ENCODE measurements at regions of chr22 and their contacts with region 1.

Region 1: GRCh38 chr22:25540166-25540907 is 24.1 kb upstream of the GRK3 start:
- DNase-seq: no peak
- ATAC-seq: no peak
- H3K4me3 ChIP-seq: no peak overlapping the region
- H3K27ac ChIP-seq: no peak overlapping the region
- H3K4me1 ChIP-seq: no peaks in the 10 kb centered on the region
- H3K27me3 ChIP-seq: no peaks in the 10 kb centered on the region
- CTCF ChIP-seq: no peak
- EP300 ChIP-seq: no peak
- POLR2A ChIP-seq: no peak
- RAD21 ChIP-seq: no peak

Region 2: GRCh38 chr22:25369041-25369440 is 171.3 kb before region 1 on chr22:
- CTCF ChIA-PET with region 1: no interaction called
- POLR2A ChIA-PET with region 1: no interaction called
- RAD21 ChIA-PET with region 1: no interaction called
- SMC1A ChIA-PET with region 1: no interaction called
- in situ Hi-C with region 1: no loop called
- intact Hi-C with region 1: no loop called
- DNase-seq: no peak
- ATAC-seq: no peak
- H3K4me3 ChIP-seq: no peak overlapping the region
- H3K27ac ChIP-seq: no peak overlapping the region
- H3K4me1 ChIP-seq: peaks cover 5% of the 10 kb centered on the region; the same call in 1 of the 2 replicates
- H3K27me3 ChIP-seq: no peaks in the 10 kb centered on the region
- CTCF ChIP-seq: no peak
- EP300 ChIP-seq: no peak
- POLR2A ChIP-seq: no peak
- RAD21 ChIP-seq: no peak

Region 3: GRCh38 chr22:25465949-25466348 is 74.4 kb before region 1 on chr22:
- CTCF ChIA-PET with region 1: interaction called, 44 read pairs
- POLR2A ChIA-PET with region 1: no interaction called
- RAD21 ChIA-PET with region 1: interaction called, 23 read pairs
- SMC1A ChIA-PET with region 1: interaction called, 12 read pairs
- in situ Hi-C with region 1: no loop called
- intact Hi-C with region 1: loop called (anchors 5 kb)
- DNase-seq: no peak
- ATAC-seq: no peak
- H3K4me3 ChIP-seq: no peak overlapping the region
- H3K27ac ChIP-seq: no peak overlapping the region
- H3K4me1 ChIP-seq: no peaks in the 10 kb centered on the region
- H3K27me3 ChIP-seq: no peaks in the 10 kb centered on the region
- CTCF ChIP-seq: no peak
- EP300 ChIP-seq: no peak
- POLR2A ChIP-seq: no peak
- RAD21 ChIP-seq: no peak

Region 4: GRCh38 chr22:25554238-25554671 is 13.9 kb after region 1 on chr22:
- CTCF ChIA-PET with region 1: interaction called, 19 read pairs
- POLR2A ChIA-PET with region 1: interaction called, 6 read pairs
- RAD21 ChIA-PET with region 1: interaction called, 18 read pairs
- SMC1A ChIA-PET with region 1: interaction called, 31 read pairs
- in situ Hi-C with region 1: no loop called
- intact Hi-C with region 1: no loop called
- DNase-seq: no peak
- ATAC-seq: peak; percentile 54; the same call in 2 of the 3 replicates
- H3K4me3 ChIP-seq: no peak overlapping the region
- H3K27ac ChIP-seq: no peak overlapping the region
- H3K4me1 ChIP-seq: peaks cover 3% of the 10 kb centered on the region; the same call in 1 of the 2 replicates
- H3K27me3 ChIP-seq: no peaks in the 10 kb centered on the region
- CTCF ChIP-seq: no peak
- EP300 ChIP-seq: no peak
- POLR2A ChIP-seq: no peak
- RAD21 ChIP-seq: no peak

Region 5: DNA sequence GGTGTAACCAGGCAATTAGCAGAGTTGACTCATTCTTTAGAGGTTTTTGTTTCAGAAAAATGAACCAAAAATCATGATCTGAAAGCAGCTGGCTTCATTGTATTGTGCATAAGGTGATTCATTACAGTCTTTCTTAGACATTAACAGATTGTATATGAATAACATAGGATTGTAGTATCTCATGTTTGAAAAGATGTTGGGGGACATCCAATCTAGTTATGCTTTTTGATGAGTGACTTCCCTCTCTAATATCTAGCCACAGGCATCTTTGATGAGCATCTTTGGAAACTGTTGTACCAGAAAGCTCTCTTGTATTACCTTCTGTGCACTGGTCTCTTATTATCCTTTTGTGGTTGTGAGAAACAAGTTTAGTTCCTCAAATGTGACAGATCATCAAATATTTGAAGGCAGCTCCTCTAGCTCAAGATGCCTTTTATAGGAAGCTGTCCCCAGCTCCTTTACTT is 32.4 kb after region 1 on chr22:
- CTCF ChIA-PET with region 1: interaction called, 89 read pairs
- POLR2A ChIA-PET with region 1: interaction called, 4 read pairs
- RAD21 ChIA-PET with region 1: interaction called, 202 read pairs
- SMC1A ChIA-PET with region 1: interaction called, 170 read pairs
- in situ Hi-C with region 1: no loop called
- intact Hi-C with region 1: no loop called
- DNase-seq: peak; percentile 80
- ATAC-seq: peak; percentile 81
- H3K4me3 ChIP-seq: 0 out of 2 replicates have a peak overlapping the region, but pooled peaks have one; percentile 0
- H3K27ac ChIP-seq: peak overlapping the region; percentile 64
- H3K4me1 ChIP-seq: peaks cover 28% of the 10 kb centered on the region
- H3K27me3 ChIP-seq: no peaks in the 10 kb centered on the region
- CTCF ChIP-seq: no peak
- EP300 ChIP-seq: peak; percentile 84 to 92
- POLR2A ChIP-seq: no peak
- RAD21 ChIP-seq: no peak

Region 6: GRCh38 chr22:25696763-25697667 is 156.7 kb after region 1 on chr22:
- CTCF ChIA-PET with region 1: interaction called, 88 read pairs
- POLR2A ChIA-PET with region 1: no interaction called
- RAD21 ChIA-PET with region 1: interaction called, 43 read pairs
- SMC1A ChIA-PET with region 1: interaction called, 61 read pairs
- in situ Hi-C with region 1: no loop called
- intact Hi-C with region 1: loop called (anchors 1 kb)
- DNase-seq: no peak
- ATAC-seq: no peak
- H3K4me3 ChIP-seq: no peak overlapping the region
- H3K27ac ChIP-seq: no peak overlapping the region
- H3K4me1 ChIP-seq: no peaks in the 10 kb centered on the region
- H3K27me3 ChIP-seq: no peaks in the 10 kb centered on the region
- CTCF ChIP-seq: no peak
- EP300 ChIP-seq: no peak
- POLR2A ChIP-seq: no peak
- RAD21 ChIP-seq: no peak

Region 7: GRCh38 chr22:25772288-25772687 is 232.0 kb after region 1 on chr22:
- CTCF ChIA-PET with region 1: interaction called, 64 read pairs
- POLR2A ChIA-PET with region 1: no interaction called
- RAD21 ChIA-PET with region 1: interaction called, 57 read pairs
- SMC1A ChIA-PET with region 1: interaction called, 52 read pairs
- in situ Hi-C with region 1: no loop called
- intact Hi-C with region 1: loop called (anchors 1 kb)
- DNase-seq: no peak
- ATAC-seq: no peak; the same call in 2 of the 3 replicates
- H3K4me3 ChIP-seq: no peak overlapping the region
- H3K27ac ChIP-seq: no peak overlapping the region
- H3K4me1 ChIP-seq: 0 out of 2 replicates have a peak, but pooled peaks cover 3% of the 10 kb centered on the region
- H3K27me3 ChIP-seq: no peaks in the 10 kb centered on the region
- CTCF ChIP-seq: no peak
- EP300 ChIP-seq: no peak
- POLR2A ChIP-seq: no peak
- RAD21 ChIP-seq: no peak

Measured in GM12878 (cell line).